Calu3 (cell line): ENCODE measurements at regions of chr16 and their contacts with region 1.

Region 1: GRCh38 chr16:88194397-88195268 is 188.1 kb upstream of the ZNF469 start:
- DNase-seq: no peak
- H3K4me3 Mint-ChIP-seq: no peak overlapping the region
- H3K27ac Mint-ChIP-seq: no peak overlapping the region
- H3K4me1 Mint-ChIP-seq: no peaks in the 10 kb centered on the region
- H3K27me3 Mint-ChIP-seq: peaks cover 36% of the 10 kb centered on the region
- CTCF ChIP-seq: no peak

Region 2: GRCh38 chr16:86942469-86943051 is 1252.1 kb before region 1 on chr16:
- CTCF ChIA-PET with region 1: no interaction called
- intact Hi-C with region 1: no loop called
- DNase-seq: no peak
- H3K4me3 Mint-ChIP-seq: no peak overlapping the region
- H3K27ac Mint-ChIP-seq: no peak overlapping the region
- H3K4me1 Mint-ChIP-seq: no peaks in the 10 kb centered on the region
- H3K27me3 Mint-ChIP-seq: peaks cover 84% of the 10 kb centered on the region
- CTCF ChIP-seq: no peak

Region 3: DNA sequence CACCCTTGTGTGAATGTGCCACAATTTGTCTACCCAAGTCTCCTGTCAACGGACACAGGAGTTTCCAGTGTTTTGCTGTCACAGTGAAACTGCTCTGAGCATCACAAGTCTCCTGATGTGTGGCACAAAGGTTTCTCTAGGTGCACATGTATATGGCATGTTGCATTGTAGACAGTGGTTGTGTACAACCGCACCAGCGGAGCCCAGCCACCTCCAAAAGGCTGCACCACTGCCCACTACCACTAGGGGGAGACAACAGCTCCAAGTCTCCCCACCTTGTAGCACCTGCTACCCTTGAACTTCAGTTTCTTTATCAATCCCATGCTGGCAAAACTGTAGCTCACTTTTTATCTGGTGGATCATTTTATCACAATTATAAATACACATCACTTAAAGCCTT is 92.6 kb after region 1 on chr16:
- CTCF ChIA-PET with region 1: no interaction called
- intact Hi-C with region 1: loop called (anchors 10 kb)
- DNase-seq: peak; percentile 86
- H3K4me3 Mint-ChIP-seq: no peak overlapping the region
- H3K27ac Mint-ChIP-seq: no peak overlapping the region
- H3K4me1 Mint-ChIP-seq: peaks cover 11% of the 10 kb centered on the region
- H3K27me3 Mint-ChIP-seq: no peaks in the 10 kb centered on the region
- CTCF ChIP-seq: peak; percentile 98